Common myeloid progenitor, CD34-positive (primary cell): ENCODE measurements at regions of chr1 and their contacts with region 1.

Region 1: DNA sequence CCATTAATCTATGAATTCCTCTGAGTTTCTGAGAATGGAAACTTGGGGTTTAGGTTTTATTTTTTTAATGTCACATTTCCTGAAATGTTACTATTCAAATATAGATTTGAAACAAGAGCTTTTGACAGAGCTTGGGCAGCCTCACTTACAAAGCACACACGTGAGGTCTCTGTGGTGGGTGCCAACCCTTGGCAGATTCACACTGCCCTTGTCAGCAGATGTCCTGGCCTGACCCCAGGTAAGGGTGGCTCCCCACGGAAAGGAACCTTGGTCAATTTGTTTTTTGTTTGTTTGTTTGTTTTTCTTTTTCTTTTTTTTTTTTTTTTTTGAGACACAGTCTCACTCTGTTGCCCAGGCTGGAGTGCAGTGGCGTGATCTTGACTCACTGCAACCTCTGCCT is 53.5 kb downstream of the FAAP20 start:
- DNase-seq: no peak
- H3K4me3 ChIP-seq: no peak overlapping the region
- H3K27ac ChIP-seq: no peak overlapping the region
- H3K4me1 ChIP-seq: peaks cover 0 to 9% (median 0%) of the 10 kb centered on the region in 4 experiments
- H3K27me3 ChIP-seq: no peaks in the 10 kb centered on the region

Region 2: GRCh38 chr1:2091611-2092604 is 49.1 kb before region 1 on chr1:
- CTCF ChIA-PET with region 1: interaction called, 26 read pairs
- POLR2A ChIA-PET with region 1: no interaction called
- DNase-seq: peak; percentile 41 to 53 (median 52)
- H3K4me3 ChIP-seq: no peak overlapping the region
- H3K27ac ChIP-seq: no peak overlapping the region
- H3K4me1 ChIP-seq: peaks cover 0 to 4% (median 2%) of the 10 kb centered on the region in 4 experiments
- H3K27me3 ChIP-seq: no peaks in the 10 kb centered on the region

Region 3: GRCh38 chr1:2127187-2128145 is 13.6 kb before region 1 on chr1:
- CTCF ChIA-PET with region 1: interaction called, 17 read pairs
- POLR2A ChIA-PET with region 1: no interaction called
- DNase-seq: peak; percentile 50 to 88 (median 85)
- H3K4me3 ChIP-seq: peak overlapping the region in 3 of 7 experiments; percentile 26 to 55 (median 51)
- H3K27ac ChIP-seq: no peak overlapping the region
- H3K4me1 ChIP-seq: peaks cover 0 to 27% (median 25%) of the 10 kb centered on the region in 4 experiments
- H3K27me3 ChIP-seq: no peaks in the 10 kb centered on the region